SK-N-SH (cell line): ENCODE measurements at regions of chr17 and their contacts with region 1.

Region 1: GRCh38 chr17:81512560-81513371 is at the start of gene ACTG1:
- DNase-seq: peak; percentile 100
- H3K4me3 ChIP-seq: peak within 1 kb of the TSS; percentile 70 to 91
- H3K27ac ChIP-seq: peak within 1 kb of the TSS; percentile 88
- H3K4me1 ChIP-seq: peaks cover 17 to 57% of the 10 kb centered on the region in 2 experiments; a peak in 3 of 4 replicates
- H3K27me3 ChIP-seq: no peaks in the 10 kb centered on the region
- CTCF ChIP-seq: no peak
- EP300 ChIP-seq: peak in 1 of 2 experiments; percentile 82; a peak in 1 of 4 replicates
- RAD21 ChIP-seq: no peak
- polyA plus RNA-seq, gene ACTG1: 3,367 and 7,871 TPM in 2 replicates

Region 2: DNA sequence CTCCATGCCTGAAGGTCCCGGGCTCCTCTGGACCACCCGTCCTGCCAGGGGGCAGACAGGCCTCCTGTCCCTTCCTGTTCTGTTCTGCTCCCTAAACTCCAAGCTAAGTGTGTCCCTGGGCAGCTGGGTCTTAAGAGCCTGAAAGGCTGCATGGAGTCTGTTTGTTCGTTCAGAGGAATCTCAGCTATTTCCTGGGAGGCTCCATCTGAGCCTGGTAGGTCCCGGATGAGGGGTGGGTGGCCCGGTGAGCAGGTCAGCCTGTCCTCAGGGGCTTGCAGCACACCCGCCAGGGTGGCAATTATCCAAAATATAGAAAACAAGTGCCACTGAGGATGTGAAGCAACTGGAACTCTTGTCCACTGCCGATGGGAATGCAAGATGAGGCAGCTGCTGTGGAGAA is 12.7 kb before region 1 on chr17:
- CTCF ChIA-PET with region 1: interaction called, 4 read pairs
- POLR2A ChIA-PET with region 1: interaction called, 11 read pairs
- DNase-seq: no peak
- H3K4me3 ChIP-seq: no peak overlapping the region
- H3K27ac ChIP-seq: no peak overlapping the region
- H3K4me1 ChIP-seq: no peaks in the 10 kb centered on the region; a peak in 1 of 4 replicates
- H3K27me3 ChIP-seq: no peaks in the 10 kb centered on the region
- CTCF ChIP-seq: no peak
- EP300 ChIP-seq: no peak
- RAD21 ChIP-seq: no peak

Region 3: DNA sequence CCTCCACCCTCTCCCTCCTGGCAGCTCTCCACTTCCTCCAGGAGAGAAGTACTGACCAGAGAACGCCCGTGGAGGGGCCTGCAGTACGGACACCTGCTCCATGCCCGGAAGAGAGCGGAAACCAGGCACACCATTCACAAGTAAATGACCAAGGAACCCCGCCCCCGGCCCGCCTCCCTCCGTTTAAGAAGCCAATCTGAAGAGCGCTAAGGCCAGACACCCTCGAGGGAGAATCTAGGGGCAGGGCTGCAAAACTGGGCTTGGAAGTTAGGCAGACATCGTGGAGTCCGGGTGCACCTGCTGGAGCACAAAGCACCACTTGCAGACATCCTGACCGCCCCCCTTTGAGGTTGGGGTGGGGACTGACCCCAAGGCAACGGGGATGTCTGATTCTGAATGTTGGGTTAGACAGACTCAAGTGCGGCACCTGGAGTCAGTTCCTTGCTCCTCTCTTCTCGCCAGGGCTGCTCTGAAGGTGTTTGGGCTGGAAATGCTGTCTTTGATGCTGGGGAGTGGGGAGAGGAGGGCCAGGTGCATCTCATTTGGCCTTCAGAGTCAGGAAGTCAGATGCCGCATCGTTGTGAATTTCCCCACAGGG is 40.4 kb after region 1 on chr17:
- CTCF ChIA-PET with region 1: interaction called, 5 read pairs
- POLR2A ChIA-PET with region 1: interaction called, 12 read pairs
- DNase-seq: peak; percentile 90
- H3K4me3 ChIP-seq: peak overlapping the region; percentile 78 to 89
- H3K27ac ChIP-seq: peak overlapping the region; percentile 81 to 90
- H3K4me1 ChIP-seq: peaks cover 25 to 26% of the 10 kb centered on the region in 2 experiments; a peak in 3 of 4 replicates
- H3K27me3 ChIP-seq: no peaks in the 10 kb centered on the region
- CTCF ChIP-seq: peak; percentile 17; the same call in 1 of the 2 replicates
- EP300 ChIP-seq: peak in 1 of 2 experiments; percentile 24; a peak in 1 of 4 replicates
- RAD21 ChIP-seq: peak; percentile 17

Region 4: GRCh38 chr17:81672954-81673353 is 160.2 kb after region 1 on chr17:
- CTCF ChIA-PET with region 1: no interaction called
- POLR2A ChIA-PET with region 1: no interaction called
- DNase-seq: no peak
- H3K4me3 ChIP-seq: no peak overlapping the region
- H3K27ac ChIP-seq: no peak overlapping the region
- H3K4me1 ChIP-seq: peaks cover 4 to 5% of the 10 kb centered on the region in 2 experiments; a peak in 3 of 4 replicates
- H3K27me3 ChIP-seq: no peaks in the 10 kb centered on the region
- CTCF ChIP-seq: no peak
- EP300 ChIP-seq: no peak
- RAD21 ChIP-seq: no peak